ENCODE measurements at regions of chr15 and their contacts with region 1.

Region 1: GRCh38 chr15:57138349-57138788 is 219.9 kb downstream of the TCF12 start:
- H3K4me3 Mint-ChIP-seq: no peak overlapping the region
- H3K27ac Mint-ChIP-seq: no peak overlapping the region
- H3K4me1 Mint-ChIP-seq: peaks cover 30% of the 10 kb centered on the region
- H3K27me3 Mint-ChIP-seq: no peaks in the 10 kb centered on the region

Region 2: DNA sequence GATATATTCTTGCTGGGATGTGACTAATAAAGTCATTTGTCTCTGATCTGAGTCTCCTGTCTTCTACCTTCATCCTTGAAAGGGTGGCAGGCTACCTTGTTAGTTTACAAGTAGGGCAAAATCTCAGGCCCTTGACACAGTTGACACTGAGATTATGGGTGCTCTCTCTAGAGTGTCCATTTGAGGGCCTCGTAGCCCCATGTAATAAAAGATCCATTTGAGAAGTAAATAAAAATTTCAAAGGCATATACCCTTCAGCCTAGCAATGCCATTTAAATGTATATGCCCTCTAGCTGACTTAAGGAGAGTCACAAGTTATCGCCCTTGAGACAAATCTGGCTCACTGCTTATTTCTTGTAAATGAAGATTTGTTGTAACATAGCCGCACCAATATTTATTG is 121.3 kb before region 1 on chr15:
- intact Hi-C with region 1: loop called (anchors 10 kb)
- H3K4me3 Mint-ChIP-seq: no peak overlapping the region
- H3K27ac Mint-ChIP-seq: no peak overlapping the region
- H3K4me1 Mint-ChIP-seq: peaks cover 31% of the 10 kb centered on the region
- H3K27me3 Mint-ChIP-seq: no peaks in the 10 kb centered on the region

Region 3: GRCh38 chr15:57031605-57032004 is 106.8 kb before region 1 on chr15:
- intact Hi-C with region 1: no loop called
- H3K4me3 Mint-ChIP-seq: no peak overlapping the region
- H3K27ac Mint-ChIP-seq: no peak overlapping the region
- H3K4me1 Mint-ChIP-seq: peaks cover 32% of the 10 kb centered on the region
- H3K27me3 Mint-ChIP-seq: no peaks in the 10 kb centered on the region

Region 4: DNA sequence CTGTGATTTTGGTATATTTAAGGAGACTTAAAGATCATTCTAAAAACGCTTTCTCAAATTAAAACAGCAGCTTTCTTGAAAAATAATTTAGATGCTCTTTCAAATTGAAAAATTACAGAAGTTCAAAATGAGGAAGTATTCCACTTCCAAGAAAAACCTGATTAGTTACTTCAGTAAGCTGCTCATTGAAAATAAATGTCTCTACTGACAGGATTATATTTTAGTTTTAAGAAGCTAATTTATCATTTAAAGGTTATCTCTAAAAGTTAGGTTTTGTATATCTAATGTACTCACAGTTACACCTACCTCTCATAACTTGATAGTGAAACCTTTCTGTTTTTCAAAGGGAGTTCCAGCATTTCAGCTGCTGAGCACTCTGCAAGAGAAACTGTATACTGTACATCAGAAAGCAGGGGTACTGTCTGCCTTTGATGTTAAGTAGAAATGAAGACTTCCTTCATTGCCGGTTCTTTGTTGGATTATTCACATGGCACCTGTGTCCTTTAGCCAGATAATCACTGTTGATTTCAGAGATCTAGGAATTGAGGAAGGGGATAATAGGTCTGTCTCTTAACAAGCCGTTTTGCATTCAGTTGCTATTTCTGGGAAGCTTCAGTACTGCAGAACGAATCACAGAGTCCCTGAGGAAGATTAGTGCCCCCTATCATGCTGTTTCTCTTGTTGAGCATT is 58.3 kb before region 1 on chr15:
- intact Hi-C with region 1: loop called (anchors 10 kb)
- H3K4me3 Mint-ChIP-seq: peak overlapping the region; percentile 37
- H3K27ac Mint-ChIP-seq: peak overlapping the region; percentile 91
- H3K4me1 Mint-ChIP-seq: peaks cover 21% of the 10 kb centered on the region
- H3K27me3 Mint-ChIP-seq: no peaks in the 10 kb centered on the region

Region 5: DNA sequence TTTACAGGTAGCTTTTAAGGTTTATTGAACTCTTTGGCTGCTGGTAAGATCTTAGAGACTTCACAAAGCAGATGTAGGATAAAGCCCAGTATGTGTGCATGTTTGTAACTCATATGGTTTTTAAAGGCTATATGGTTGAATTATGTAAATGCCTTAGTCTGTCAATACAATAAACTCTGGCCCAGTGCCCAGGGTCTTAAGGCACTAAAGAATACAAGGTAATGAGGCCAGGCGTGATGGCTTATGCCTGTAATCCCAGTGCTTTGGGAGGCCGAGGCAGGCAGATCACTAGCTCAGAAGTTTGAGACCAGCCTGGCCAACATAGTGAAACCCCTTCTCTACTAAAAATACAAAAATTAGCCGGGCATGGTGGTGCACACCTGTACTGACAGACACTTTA is 67.6 kb after region 1 on chr15:
- intact Hi-C with region 1: no loop called
- H3K4me3 Mint-ChIP-seq: no peak overlapping the region
- H3K27ac Mint-ChIP-seq: no peak overlapping the region
- H3K4me1 Mint-ChIP-seq: peaks cover 11% of the 10 kb centered on the region
- H3K27me3 Mint-ChIP-seq: no peaks in the 10 kb centered on the region